Right lobe of liver (tissue), 6 donors: ENCODE measurements at regions of chr11 and their contacts with region 1.

Region 1: DNA sequence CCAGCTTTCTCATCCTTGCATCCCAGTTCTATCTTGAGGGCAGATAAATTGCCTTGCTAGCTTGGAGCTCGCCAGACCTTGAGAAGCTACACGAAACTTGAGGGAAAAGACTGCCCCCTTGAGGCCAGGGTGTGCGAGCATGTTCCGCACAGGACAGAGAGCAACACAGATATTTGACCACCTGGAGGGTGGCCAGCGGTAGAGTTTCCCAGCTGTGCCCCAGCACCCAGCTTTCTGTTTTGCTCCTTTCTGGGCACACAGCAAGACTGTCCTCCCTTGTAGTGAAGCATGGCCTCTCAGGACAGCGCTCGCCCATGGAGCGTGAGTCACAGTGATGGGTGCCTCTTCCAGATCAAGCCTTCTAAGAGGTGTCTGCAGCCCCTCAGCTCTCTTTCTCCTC is 23.5 kb downstream of the SPATA19 start:
- DNase-seq: peak in 1 of 3 donors; percentile 40
- ATAC-seq: peak; percentile 68 to 78 (median 73)
- H3K4me3 ChIP-seq: no peak overlapping the region
- H3K27ac ChIP-seq: no peak overlapping the region
- H3K4me1 ChIP-seq: no peaks in the 10 kb centered on the region
- H3K27me3 ChIP-seq: no peaks in the 10 kb centered on the region
- CTCF ChIP-seq: peak; percentile 35 to 69 (median 60)
- POLR2A ChIP-seq: no peak

Region 2: DNA sequence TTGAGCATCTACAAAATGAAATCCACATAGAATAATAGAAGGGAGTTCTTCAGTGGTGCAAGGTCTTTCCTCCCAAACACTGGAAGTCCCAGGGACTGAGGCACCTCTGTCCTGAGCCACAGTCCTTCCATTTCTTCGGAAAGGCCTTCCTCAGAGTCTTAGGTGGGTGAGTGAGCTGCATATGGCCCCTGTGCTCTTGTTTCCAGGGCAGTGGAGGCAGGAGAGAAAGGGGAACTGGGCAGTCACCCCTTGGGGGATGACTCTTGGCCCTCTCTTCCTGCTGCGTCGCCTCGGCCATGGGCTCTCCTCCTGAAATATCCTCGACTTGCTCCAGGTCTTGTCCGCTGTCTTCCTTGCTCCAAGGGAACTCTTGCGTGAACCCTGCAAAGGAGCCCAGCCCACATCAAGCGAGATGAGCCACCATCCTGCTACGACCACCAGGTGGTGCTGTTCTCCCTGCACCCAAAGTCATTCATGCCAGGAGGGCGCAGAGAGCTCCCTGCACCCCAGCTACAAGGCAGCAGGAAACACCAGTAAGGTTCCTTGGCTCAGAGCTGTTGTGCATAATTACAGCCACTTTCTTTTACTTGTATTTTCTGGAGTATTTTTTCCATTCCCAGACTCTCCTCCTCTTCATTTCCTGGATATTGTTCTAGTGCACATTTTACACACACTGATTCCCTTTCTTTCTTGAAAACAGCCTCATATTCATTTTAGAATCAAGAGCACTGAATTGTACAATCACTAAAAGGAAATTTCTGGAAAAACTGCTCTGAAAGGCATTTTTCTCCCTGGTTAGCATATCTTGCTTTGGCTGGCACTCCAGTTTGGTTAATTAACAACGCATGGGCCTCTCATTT is 687.2 kb before region 1 on chr11:
- intact Hi-C with region 1: loop called in 1 of 2 experiments (anchors 10 kb)
- DNase-seq: peak; percentile 55 to 63 (median 58)
- ATAC-seq: peak; percentile 88 to 94 (median 90)
- H3K4me3 ChIP-seq: no peak overlapping the region
- H3K27ac ChIP-seq: no peak overlapping the region
- H3K4me1 ChIP-seq: no peaks in the 10 kb centered on the region
- H3K27me3 ChIP-seq: no peaks in the 10 kb centered on the region
- CTCF ChIP-seq: peak; percentile 65 to 90 (median 83)
- POLR2A ChIP-seq: no peak

Region 3: GRCh38 chr11:133149698-133150097 is 672.1 kb before region 1 on chr11:
- intact Hi-C with region 1: loop called in 1 of 2 experiments (anchors 10 kb)
- DNase-seq: no peak
- ATAC-seq: no peak
- H3K4me3 ChIP-seq: no peak overlapping the region
- H3K27ac ChIP-seq: no peak overlapping the region
- H3K4me1 ChIP-seq: no peaks in the 10 kb centered on the region
- H3K27me3 ChIP-seq: no peaks in the 10 kb centered on the region
- CTCF ChIP-seq: no peak
- POLR2A ChIP-seq: no peak